AG04449 (cell line): ENCODE measurements at regions of chr3 and their contacts with region 1.

Region 1: GRCh38 chr3:187679638-187680396 is 9.6 kb upstream of the SST start:
- DNase-seq: no peak
- H3K4me3 ChIP-seq: no peak overlapping the region
- CTCF ChIP-seq: peak; percentile 93

Region 2: GRCh38 chr3:186162221-186162620 is 1517.6 kb before region 1 on chr3:
- CTCF ChIA-PET with region 1: no interaction called
- POLR2A ChIA-PET with region 1: no interaction called
- DNase-seq: no peak
- H3K4me3 ChIP-seq: no peak overlapping the region
- CTCF ChIP-seq: no peak

Region 3: DNA sequence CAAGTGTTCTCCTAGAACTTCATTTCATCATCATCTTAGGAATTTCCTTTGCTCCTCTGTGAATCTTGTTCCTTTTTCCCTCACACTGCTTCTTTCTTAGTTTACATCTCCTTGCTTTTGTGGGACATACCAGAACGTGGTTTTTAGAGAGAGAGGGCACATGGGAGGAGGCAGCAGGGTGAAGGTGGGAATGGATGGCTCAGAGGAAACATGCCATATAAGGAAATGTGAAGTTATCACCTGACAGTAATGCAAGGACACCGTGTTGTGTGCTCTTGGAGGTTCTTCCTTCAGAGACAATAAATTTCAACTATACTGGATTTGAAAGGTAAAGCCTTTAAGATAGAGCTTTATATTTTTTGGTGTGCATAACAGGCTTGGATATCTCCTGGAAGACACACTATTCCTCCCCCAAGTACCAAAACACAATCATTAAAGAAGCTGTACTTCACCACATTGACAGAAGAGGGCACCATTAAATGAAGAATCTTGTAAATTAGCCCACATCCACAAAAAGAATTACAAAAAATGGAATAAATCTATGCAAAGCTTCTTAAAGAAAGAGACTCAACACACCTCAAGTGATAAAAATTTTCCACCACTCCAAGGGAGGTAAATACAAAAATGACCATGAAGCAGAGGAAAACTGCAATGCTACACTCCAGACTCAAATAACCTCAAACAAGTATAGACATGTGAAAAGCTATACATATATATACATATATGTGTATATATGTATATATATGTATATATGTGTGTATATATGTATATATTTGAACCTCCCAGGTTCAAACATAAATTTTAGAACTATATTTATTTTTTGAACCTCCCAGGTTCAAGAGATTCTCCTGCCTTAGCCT is 566.7 kb before region 1 on chr3:
- CTCF ChIA-PET with region 1: interaction called, 34 read pairs
- POLR2A ChIA-PET with region 1: no interaction called
- DNase-seq: no peak
- H3K4me3 ChIP-seq: no peak overlapping the region
- CTCF ChIP-seq: peak; percentile 39

Region 4: DNA sequence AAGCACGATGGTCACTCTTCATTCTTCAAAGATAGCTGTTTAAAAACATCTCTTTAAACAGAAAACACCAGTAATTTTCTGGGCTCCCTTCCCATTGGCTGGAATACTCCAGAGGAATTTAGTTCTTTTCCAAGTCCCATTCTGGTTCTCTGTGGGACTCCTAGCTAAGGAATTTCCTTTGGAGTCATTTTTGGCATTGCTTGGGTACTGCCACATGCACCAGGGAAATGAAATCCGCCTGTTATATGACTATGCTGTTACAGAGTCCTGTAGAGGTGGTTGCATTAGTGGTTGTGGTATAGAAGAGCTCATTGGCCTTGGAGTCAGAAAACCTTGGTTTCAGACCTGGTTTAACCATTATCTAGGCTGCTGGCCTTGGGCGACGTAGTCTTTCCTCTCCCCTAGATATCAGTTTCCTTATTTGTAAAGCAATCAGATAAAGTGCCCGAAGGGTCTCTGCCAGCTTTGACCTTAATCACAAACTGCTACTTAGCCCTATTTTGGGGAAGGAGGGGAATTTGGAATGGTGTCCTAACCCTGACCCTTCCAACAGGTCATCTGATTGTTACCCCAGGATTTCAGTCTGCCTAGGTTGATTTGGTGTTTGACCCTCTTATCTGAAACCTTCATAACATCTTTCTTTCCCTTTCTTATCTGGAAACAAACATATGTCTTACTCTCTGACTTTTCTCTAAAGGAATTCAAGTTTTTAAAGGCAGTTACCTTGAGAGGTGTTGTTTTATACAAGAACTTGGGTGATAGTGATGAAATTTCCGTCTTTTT is 469.1 kb before region 1 on chr3:
- CTCF ChIA-PET with region 1: interaction called, 538 read pairs
- POLR2A ChIA-PET with region 1: no interaction called
- DNase-seq: peak; percentile 45
- H3K4me3 ChIP-seq: no peak overlapping the region
- CTCF ChIP-seq: no peak

Region 5: DNA sequence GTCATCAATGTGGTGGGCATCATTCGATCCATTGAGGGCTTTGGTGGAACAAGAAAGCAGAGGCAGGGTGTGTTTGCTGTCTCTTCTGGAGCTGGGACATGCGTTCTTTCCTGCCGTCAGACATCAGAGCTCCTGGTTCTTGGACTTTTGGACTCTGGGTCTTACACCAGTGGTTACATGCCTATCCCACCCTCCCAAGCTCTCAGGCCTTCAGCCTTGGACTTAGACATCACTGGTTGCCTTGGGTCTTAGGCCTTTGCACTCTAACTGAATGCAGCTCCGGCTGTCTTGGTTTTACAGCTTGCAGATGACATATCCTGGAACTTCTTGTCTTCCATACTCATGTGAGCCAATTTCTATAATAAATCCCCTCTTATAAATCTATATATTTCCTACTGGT is 380.2 kb before region 1 on chr3:
- CTCF ChIA-PET with region 1: interaction called, 30 read pairs
- POLR2A ChIA-PET with region 1: no interaction called
- DNase-seq: no peak
- H3K4me3 ChIP-seq: no peak overlapping the region
- CTCF ChIP-seq: no peak

Region 6: DNA sequence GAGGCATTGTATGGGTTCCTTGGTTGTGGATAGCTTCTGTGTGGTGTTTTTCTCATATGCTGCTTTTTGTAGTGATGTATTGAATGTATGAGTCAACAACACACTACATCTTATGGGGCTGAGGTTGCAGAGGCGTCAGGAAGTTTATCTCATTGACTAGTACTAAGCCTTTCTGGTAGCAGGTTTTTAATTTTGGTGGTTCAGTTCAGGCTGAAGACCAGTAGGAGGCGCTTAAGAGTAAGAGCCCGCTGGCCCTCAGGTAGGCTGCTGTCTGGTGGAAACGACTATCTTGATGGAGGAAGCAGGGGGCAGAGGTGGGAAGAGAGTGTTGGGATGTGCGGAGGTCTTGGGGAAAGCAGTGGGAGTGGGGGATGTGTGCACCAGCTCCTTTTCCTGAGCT is 249.2 kb before region 1 on chr3:
- CTCF ChIA-PET with region 1: interaction called, 11 read pairs
- POLR2A ChIA-PET with region 1: no interaction called
- DNase-seq: no peak
- H3K4me3 ChIP-seq: no peak overlapping the region
- CTCF ChIP-seq: no peak

Region 7: DNA sequence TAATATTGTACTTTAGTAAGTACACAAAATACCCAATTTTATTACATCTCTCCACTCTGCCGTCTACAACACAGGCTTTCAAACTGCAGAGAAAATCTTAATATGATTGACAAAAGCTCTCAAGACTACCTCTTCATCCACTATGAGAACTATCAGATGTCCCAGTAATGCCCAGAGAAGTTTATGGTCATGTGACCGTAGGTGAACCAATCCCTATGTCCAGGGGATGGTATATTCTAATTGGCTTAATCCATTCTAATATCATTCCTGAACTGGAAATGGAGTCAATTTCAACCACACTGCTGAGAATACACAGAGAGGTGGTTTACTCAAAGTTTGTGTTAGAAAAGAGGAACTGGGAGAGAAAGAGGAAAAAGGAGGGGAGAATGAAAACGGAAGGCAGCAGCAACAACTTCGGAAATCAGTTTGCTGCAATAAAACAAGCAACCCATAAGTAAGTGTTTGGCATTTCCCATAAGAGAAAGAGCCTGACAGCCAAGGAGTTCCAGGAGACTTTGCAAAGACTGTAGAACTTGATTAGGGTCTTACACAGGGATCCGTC is 16.9 kb before region 1 on chr3:
- CTCF ChIA-PET with region 1: interaction called, 36 read pairs
- POLR2A ChIA-PET with region 1: no interaction called
- DNase-seq: no peak
- H3K4me3 ChIP-seq: no peak overlapping the region
- CTCF ChIP-seq: no peak

Region 8: DNA sequence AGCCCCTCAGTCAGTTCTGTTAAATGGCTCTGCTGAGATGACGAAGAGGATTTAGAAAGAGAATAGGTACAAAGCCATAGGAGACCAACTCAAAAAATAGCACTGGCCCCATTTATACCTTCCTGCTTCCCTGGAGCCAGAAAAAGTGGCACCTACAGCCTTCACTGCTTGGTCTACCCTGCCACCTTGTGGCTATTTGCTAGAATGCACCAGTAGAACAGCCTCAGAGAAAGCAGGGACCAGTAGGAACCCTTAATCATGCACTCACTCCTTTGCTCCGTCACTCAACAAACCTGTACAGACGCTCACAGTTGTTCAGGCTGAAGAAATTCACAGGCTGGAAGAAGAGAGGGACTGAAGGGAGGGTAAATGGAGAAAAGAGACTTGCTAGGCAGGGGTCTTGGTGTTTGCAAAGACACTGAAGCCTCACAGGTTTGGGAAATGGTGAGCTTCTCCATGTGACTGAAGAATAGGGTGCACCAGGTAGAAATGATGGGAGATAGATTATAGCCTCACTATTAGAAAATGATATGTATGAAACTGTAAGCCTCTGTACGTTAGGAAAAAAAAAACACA is 34.7 kb after region 1 on chr3:
- CTCF ChIA-PET with region 1: interaction called, 98 read pairs
- POLR2A ChIA-PET with region 1: no interaction called
- DNase-seq: no peak
- H3K4me3 ChIP-seq: no peak overlapping the region
- CTCF ChIP-seq: peak; percentile 90

Region 9: GRCh38 chr3:187828579-187829452 is 149.0 kb after region 1 on chr3:
- CTCF ChIA-PET with region 1: no interaction called
- POLR2A ChIA-PET with region 1: no interaction called
- DNase-seq: no peak
- H3K4me3 ChIP-seq: no peak overlapping the region
- CTCF ChIP-seq: no peak